Left lung (tissue), 14 donors: ENCODE measurements at regions of chr22 and their contacts with region 1.

Region 1: DNA sequence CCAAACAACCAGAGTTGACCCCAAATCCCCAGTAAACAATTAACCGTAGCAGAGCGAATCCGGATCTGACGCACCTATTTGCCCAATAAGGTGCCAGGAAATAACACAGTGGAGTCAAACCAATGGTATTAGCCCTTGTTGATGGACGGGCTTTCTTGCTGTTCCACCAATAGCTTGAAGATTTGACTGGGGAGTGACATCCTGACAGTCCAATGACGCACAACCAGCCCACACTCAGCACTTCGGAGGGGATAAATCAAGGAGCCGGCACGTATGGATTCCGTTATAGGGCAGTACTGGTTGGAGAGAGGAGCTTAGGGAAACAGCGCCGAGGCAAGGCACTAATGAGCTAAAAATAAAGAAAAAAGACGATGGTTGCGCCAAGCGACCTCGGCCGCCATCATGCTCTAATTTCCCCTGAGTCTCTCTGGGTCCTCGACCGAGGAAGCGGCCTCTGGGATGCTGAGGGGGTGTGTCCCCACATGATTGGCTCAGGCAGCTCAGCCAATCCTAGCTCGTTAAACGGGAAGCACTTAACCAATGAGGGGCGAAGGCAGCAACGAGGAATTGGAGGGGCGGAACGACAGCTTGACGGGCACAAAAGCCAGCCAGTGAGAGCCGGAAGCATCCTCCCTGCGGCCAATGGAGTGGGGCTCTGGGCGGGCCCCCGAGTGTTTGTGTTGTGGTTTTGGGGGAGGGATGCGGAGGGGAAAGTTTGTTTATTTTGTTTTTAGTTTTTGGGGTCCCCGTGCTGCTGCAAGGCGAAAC is 49.5 kb downstream of the FAM83F start:
- DNase-seq: peak; percentile 93 to 100 (median 98)
- ATAC-seq: peak; percentile 93
- H3K4me3 ChIP-seq: peak overlapping the region; percentile 65 to 73
- H3K27ac ChIP-seq: peak overlapping the region; percentile 90 to 96
- H3K4me1 ChIP-seq: peaks cover 10 to 17% of the 10 kb centered on the region in 2 donors
- H3K27me3 ChIP-seq: peaks cover 0 to 7% of the 10 kb centered on the region in 2 donors
- CTCF ChIP-seq: no peak

Region 2: GRCh38 chr22:39932918-39933649 is 111.2 kb before region 1 on chr22:
- intact Hi-C with region 1: no loop called
- DNase-seq: no peak
- ATAC-seq: peak; percentile 39
- H3K4me3 ChIP-seq: no peak overlapping the region
- H3K27ac ChIP-seq: no peak overlapping the region
- H3K4me1 ChIP-seq: peaks cover 0 to 37% of the 10 kb centered on the region in 2 donors
- H3K27me3 ChIP-seq: peaks cover 0 to 87% of the 10 kb centered on the region in 2 donors
- CTCF ChIP-seq: peak; percentile 32 to 58

Region 3: GRCh38 chr22:40332319-40332781 is 288.1 kb after region 1 on chr22:
- intact Hi-C with region 1: loop called in 1 of 2 experiments (anchors 10 kb)
- DNase-seq: no peak
- ATAC-seq: no peak
- H3K4me3 ChIP-seq: no peak overlapping the region
- H3K27ac ChIP-seq: no peak overlapping the region
- H3K4me1 ChIP-seq: peaks cover 0 to 23% of the 10 kb centered on the region in 2 donors
- H3K27me3 ChIP-seq: no peaks in the 10 kb centered on the region
- CTCF ChIP-seq: no peak

Region 4: GRCh38 chr22:40346178-40347118 is 302.2 kb after region 1 on chr22 and contains the start of gene ADSL:
- intact Hi-C with region 1: loop called in 1 of 2 experiments (anchors 5 kb)
- DNase-seq: peak; percentile 87 to 97 (median 91)
- ATAC-seq: peak; percentile 99
- H3K4me3 ChIP-seq: peak within 1 kb of the TSS; percentile 67 to 91
- H3K27ac ChIP-seq: peak within 1 kb of the TSS; percentile 80 to 92
- H3K4me1 ChIP-seq: peaks cover 10 to 28% of the 10 kb centered on the region in 2 donors
- H3K27me3 ChIP-seq: no peaks in the 10 kb centered on the region
- CTCF ChIP-seq: no peak
- polyA plus RNA-seq, gene ADSL: 89.5 to 110 (median 104) TPM